Mammary epithelial cell (primary cell): ENCODE measurements at regions of chr3 and their contacts with region 1.

Region 1: GRCh38 chr3:1214933-1215332 is 122.1 kb downstream of the CNTN6 start:
- DNase-seq: no peak
- H3K4me3 ChIP-seq: no peak overlapping the region
- H3K27ac ChIP-seq: no peak overlapping the region
- H3K4me1 ChIP-seq: no peaks in the 10 kb centered on the region
- H3K27me3 ChIP-seq: no peaks in the 10 kb centered on the region
- CTCF ChIP-seq: no peak

Region 2: GRCh38 chr3:1195947-1196346 is 19.0 kb before region 1 on chr3:
- CTCF ChIA-PET with region 1: interaction called, 10 read pairs
- dilution Hi-C with region 1: no loop called
- in situ Hi-C with region 1: no loop called
- intact Hi-C with region 1: no loop called
- DNase-seq: peak; percentile 12
- H3K4me3 ChIP-seq: no peak overlapping the region
- H3K27ac ChIP-seq: no peak overlapping the region
- H3K4me1 ChIP-seq: no peaks in the 10 kb centered on the region
- H3K27me3 ChIP-seq: no peaks in the 10 kb centered on the region
- CTCF ChIP-seq: no peak

Region 3: GRCh38 chr3:1808590-1808989 is 593.7 kb after region 1 on chr3:
- CTCF ChIA-PET with region 1: no interaction called
- dilution Hi-C with region 1: no loop called
- in situ Hi-C with region 1: no loop called
- intact Hi-C with region 1: no loop called
- DNase-seq: no peak
- H3K4me3 ChIP-seq: no peak overlapping the region
- H3K27ac ChIP-seq: no peak overlapping the region
- H3K4me1 ChIP-seq: no peaks in the 10 kb centered on the region
- H3K27me3 ChIP-seq: no peaks in the 10 kb centered on the region
- CTCF ChIP-seq: no peak